CD8-positive, alpha-beta T cell (primary cell): ENCODE measurements at regions of chr5 and their contacts with region 1.

Region 1: DNA sequence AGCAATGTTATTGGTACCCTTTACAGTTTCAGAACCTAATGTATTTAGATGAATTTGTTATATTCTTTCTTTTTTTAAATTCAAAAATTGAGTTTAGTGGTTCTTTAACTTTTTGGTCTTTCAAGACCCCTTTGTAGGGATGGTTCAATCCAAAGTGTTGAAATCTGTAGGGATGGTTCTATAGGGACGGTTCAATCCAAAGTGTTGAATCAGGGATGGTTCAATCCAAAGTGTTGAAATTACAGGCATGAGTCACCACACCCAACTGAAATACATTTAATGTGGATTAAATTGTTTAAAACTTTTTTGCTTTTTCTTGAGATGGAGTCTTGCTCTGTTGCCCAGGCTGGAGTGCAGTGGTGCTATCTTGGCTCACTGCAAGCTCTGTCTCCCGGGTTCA is 30.6 kb downstream of the SNX2 start:
- DNase-seq: no peak
- ATAC-seq: no peak
- H3K4me3 ChIP-seq: no peak overlapping the region
- H3K4me3 Mint-ChIP-seq: no peak overlapping the region
- H3K27ac ChIP-seq: no peak overlapping the region
- H3K27ac Mint-ChIP-seq: no peak overlapping the region
- H3K4me1 ChIP-seq: no peaks in the 10 kb centered on the region
- H3K4me1 Mint-ChIP-seq: no peaks in the 10 kb centered on the region
- H3K27me3 ChIP-seq: no peaks in the 10 kb centered on the region
- H3K27me3 Mint-ChIP-seq: no peaks in the 10 kb centered on the region
- CTCF ChIP-seq: no peak

Region 2: GRCh38 chr5:122780296-122780695 is 25.2 kb before region 1 on chr5:
- CTCF ChIA-PET with region 1: no interaction called
- POLR2A ChIA-PET with region 1: no interaction called
- intact Hi-C with region 1: loop called in 1 of 2 experiments (anchors 1 kb)
- DNase-seq: no peak
- ATAC-seq: no peak
- H3K4me3 ChIP-seq: no peak overlapping the region
- H3K4me3 Mint-ChIP-seq: no peak overlapping the region
- H3K27ac ChIP-seq: no peak overlapping the region
- H3K27ac Mint-ChIP-seq: no peak overlapping the region
- H3K4me1 ChIP-seq: peaks cover 32% of the 10 kb centered on the region
- H3K4me1 Mint-ChIP-seq: peaks cover 75% of the 10 kb centered on the region
- H3K27me3 ChIP-seq: no peaks in the 10 kb centered on the region
- H3K27me3 Mint-ChIP-seq: no peaks in the 10 kb centered on the region
- CTCF ChIP-seq: no peak